Head of caudate nucleus (tissue), 42 donors: ENCODE measurements at regions of chr12 and their contacts with region 1.

Region 1: DNA sequence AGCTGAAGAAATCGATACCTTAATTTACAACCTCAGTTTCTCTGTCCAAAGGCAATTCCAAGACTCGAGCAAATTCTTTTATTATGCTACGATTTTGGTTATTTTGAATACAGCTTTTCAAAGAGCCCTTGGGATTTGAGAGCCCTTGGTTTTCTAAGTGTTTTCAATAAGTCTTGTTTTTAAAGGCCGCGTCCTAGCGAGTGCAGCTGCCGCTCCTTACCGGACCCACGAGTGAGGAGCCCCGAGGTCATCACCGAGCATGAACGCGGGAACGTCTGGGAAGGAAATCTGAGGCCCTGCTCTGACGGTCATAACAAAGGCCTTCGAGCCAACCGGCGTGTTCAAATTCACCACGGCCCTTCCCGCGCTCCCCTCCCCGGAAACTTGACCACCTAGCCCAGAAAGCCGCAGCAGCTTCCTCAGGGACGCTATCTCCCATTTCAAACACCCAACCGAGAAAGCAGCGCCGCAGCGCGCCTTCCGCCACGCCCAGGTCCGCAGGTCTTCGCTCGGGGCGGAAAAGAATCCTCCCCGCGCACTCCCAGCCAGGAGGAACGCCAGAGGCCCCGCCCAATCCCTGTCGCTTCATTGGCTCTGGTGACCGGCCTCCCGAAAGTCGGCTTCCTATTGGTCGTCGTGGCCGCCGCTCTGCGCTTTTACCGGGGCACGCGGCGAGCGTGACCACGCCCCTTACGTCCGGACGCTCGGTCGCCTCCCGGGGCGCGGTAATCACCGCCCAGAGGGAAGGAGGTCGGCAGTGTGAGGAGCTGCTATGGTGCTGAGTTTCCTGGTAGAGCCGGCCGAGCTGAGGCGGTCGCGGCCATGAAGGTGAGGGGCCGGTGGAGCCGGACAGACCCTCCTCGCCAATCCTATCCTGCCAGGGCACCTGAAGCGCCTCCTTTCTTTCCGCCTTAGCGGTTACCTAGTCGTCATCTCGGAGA is at the start of gene RNF34:
- DNase-seq: peak; percentile 96 to 99 (median 98)

Region 2: GRCh38 chr12:121334513-121335343 is 64.9 kb before region 1 on chr12:
- intact Hi-C with region 1: loop called (anchors 5 kb)
- DNase-seq: peak in 16 of 42 donors; percentile 16 to 76 (median 47)

Region 3: GRCh38 chr12:121351820-121352681 is 47.6 kb before region 1 on chr12 and contains the start of gene ANAPC5:
- intact Hi-C with region 1: loop called (anchors 5 kb)
- DNase-seq: peak; percentile 87 to 98 (median 95)